ENCODE measurements at regions of chr4 and their contacts with region 1.

Region 1: DNA sequence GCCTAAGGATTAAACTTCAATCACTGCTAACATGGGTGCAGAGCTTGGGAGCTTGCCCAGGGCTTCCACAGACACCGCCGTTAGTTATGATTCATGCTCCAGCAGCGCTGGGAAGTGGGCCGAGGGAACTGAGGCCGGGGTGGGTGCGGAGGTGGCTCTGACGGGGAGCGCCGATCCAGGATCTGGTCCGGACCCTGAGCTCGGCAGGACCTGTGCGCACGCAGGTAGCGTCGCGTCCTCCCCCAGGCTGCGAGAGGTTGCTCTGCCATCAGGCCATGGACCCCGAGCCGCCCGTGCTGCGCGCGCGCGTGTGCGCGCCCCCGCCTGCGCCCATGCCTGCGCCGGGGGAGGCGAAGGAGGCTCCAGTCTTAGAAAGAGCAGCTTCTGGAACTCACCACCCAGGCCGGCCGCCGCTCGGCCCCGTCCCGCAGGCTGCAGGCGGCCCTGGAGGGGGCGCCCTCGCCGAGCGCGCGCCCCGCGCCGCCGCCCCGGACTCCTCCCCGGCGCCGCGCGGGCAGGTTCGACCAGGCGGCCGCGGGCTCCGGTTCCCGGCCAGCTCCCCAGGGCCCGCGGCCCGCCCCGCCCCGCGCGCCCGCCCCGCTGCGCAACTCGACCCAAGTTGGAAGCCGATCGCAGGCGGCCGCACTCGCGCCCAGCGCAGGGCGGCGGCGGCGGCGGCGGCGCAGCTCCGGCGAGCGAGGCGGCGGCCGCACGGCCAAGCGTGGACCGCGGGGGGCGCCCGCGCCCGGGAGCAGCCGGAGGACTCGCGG is 729 bp upstream of the ADRA2C start:
- DNase-seq: peak; percentile 42 to 56
- ATAC-seq: peak; percentile 78 to 88
- H3K4me3 ChIP-seq: peak overlapping the region; percentile 45
- H3K27ac ChIP-seq: peak overlapping the region; percentile 80 to 81
- H3K4me1 ChIP-seq: no peaks in the 10 kb centered on the region
- CTCF ChIP-seq: peak; percentile 56
- EP300 ChIP-seq: no peak
- POLR2A ChIP-seq: peak; percentile 20
- RAD21 ChIP-seq: no peak

Region 2: DNA sequence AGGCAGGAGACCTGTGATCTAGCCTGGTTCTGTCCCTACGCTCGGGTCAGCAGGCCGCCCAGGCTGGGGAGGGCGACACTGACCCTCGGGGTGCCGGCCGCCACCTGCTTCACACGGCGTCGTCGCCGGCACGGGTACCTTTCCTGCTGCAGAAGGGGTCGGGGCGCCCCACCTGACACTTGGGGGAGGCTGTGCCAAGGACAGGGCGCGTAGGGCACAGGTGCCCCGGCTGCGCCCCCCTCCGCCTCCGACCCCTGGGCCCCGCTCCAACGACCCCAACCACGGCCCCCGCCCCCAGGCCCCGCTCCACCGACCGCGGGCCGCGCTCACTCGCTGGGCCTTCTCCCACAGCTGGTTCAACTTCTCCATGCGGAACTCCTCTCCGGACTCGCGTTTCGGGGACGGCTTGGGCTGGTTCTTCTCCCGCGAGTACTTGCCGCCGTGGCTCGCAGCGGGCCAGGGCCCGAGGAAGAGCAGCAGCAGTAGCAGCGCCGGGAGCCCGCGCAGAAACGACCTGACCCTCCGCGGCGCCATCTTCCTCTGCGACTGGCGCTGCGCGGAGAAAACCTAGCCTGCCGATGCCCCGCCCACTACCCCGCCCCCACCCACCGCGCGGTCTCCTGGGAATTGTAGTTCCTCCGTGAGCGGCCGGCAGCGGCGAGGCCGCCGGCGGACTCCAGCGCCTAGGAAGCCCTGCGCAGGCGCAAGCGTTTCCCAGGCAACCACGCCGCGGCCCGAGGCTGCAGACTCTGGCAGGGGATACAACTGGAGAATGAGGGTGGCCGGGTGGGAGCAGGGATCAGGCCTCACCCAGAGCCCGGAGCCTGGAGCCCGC is 233.4 kb before region 1 on chr4 and contains the start of gene LRPAP1:
- CTCF ChIA-PET with region 1: no interaction called
- POLR2A ChIA-PET with region 1: no interaction called
- DNase-seq: peak; percentile 81 to 97
- ATAC-seq: peak; percentile 94 to 97
- H3K4me3 ChIP-seq: peak within 1 kb of the TSS; percentile 92
- H3K27ac ChIP-seq: peak within 1 kb of the TSS; percentile 87 to 93
- H3K4me1 ChIP-seq: peaks cover 8% of the 10 kb centered on the region; the same call in 2 of the 3 replicates
- CTCF ChIP-seq: no peak
- EP300 ChIP-seq: no peak
- POLR2A ChIP-seq: peak; percentile 92
- RAD21 ChIP-seq: no peak
- polyA plus RNA-seq, gene LRPAP1: 60.7 and 64.3 TPM in 2 replicates

Region 3: DNA sequence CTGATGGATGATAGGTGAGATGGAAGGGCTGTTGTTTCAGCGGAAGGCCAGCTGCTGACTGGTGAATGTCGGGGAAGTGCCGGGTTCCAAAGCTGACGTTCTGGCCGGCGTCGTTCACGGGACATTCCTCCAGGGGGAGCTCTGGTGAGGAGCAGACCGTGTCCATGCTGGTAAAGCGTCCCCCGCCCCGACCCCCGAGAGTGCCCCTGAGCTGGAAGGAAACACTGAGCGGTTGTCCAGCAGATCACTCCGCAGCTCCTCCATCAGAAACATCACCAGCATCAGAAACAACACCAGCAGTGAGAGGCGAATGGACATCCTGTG is 17.9 kb before region 1 on chr4:
- CTCF ChIA-PET with region 1: interaction called, 31 read pairs
- POLR2A ChIA-PET with region 1: no interaction called
- DNase-seq: no peak
- ATAC-seq: no peak; a peak in 1 of 6 replicates
- H3K4me3 ChIP-seq: no peak overlapping the region
- H3K27ac ChIP-seq: no peak overlapping the region
- H3K4me1 ChIP-seq: no peaks in the 10 kb centered on the region; the same call in 2 of the 3 replicates
- CTCF ChIP-seq: no peak
- EP300 ChIP-seq: no peak
- POLR2A ChIP-seq: no peak
- RAD21 ChIP-seq: no peak

Region 4: GRCh38 chr4:3753726-3754412 is 11.6 kb before region 1 on chr4:
- CTCF ChIA-PET with region 1: interaction called, 31 read pairs
- POLR2A ChIA-PET with region 1: no interaction called
- DNase-seq: no peak
- ATAC-seq: no peak
- H3K4me3 ChIP-seq: no peak overlapping the region
- H3K27ac ChIP-seq: no peak overlapping the region
- H3K4me1 ChIP-seq: no peaks in the 10 kb centered on the region
- CTCF ChIP-seq: no peak
- EP300 ChIP-seq: no peak
- POLR2A ChIP-seq: no peak
- RAD21 ChIP-seq: no peak

Region 5: GRCh38 chr4:3783406-3784306 is 18.2 kb after region 1 on chr4:
- CTCF ChIA-PET with region 1: interaction called, 54 read pairs
- POLR2A ChIA-PET with region 1: no interaction called
- DNase-seq: peak; percentile 31 to 32
- ATAC-seq: peak; percentile 57 to 82; a peak in 4 of 6 replicates
- H3K4me3 ChIP-seq: no peak overlapping the region
- H3K27ac ChIP-seq: no peak overlapping the region
- H3K4me1 ChIP-seq: peaks cover 19% of the 10 kb centered on the region; the same call in 2 of the 3 replicates
- CTCF ChIP-seq: peak; percentile 24; the same call in 2 of the 3 replicates
- EP300 ChIP-seq: no peak
- POLR2A ChIP-seq: no peak
- RAD21 ChIP-seq: peak; percentile 39 to 52; a peak in 3 of 5 replicates

Region 6: DNA sequence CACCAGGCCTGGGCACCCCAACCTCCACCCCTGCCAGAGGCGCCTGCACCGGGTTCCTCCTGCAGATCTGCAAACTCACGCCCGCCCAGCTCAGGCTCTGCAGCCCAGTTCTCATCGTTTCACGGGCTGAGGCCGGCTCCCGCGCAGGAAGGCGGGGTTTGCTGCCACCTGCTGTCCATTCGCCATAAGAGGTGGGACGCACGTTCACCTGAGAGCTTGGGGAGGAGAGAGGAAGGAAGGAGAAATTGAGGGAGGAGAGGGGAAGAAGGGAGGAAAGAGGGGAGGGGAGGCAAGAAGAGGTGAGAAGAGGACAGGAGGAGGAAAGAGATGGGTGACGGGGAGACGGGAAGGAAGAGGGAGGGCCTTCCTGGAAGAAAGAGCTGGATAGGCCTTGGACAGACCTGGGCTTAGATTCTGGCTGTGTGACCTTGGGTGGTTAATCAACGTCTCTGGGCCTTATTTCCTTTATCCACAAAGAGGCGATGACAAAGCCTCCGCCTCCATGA is 115.2 kb after region 1 on chr4:
- CTCF ChIA-PET with region 1: interaction called, 31 read pairs
- POLR2A ChIA-PET with region 1: interaction called, 4 read pairs
- DNase-seq: peak; percentile 33 to 57
- ATAC-seq: peak; percentile 97 to 98
- H3K4me3 ChIP-seq: no peak overlapping the region
- H3K27ac ChIP-seq: no peak overlapping the region
- H3K4me1 ChIP-seq: no peaks in the 10 kb centered on the region
- CTCF ChIP-seq: peak; percentile 59
- EP300 ChIP-seq: no peak
- POLR2A ChIP-seq: no peak
- RAD21 ChIP-seq: peak; percentile 78 to 79

Measured in A549 (cell line).